CD14-positive monocyte (primary cell): ENCODE measurements at regions of chr2 and their contacts with region 1.

Region 1: GRCh38 chr2:238060542-238061314 is at the start of gene SCLY:
- DNase-seq: peak; percentile 98
- H3K4me3 ChIP-seq: peak within 1 kb of the TSS; percentile 74 to 88 (median 82)
- H3K4me3 Mint-ChIP-seq: peak within 1 kb of the TSS; percentile 90 to 94
- H3K27ac ChIP-seq: peak within 1 kb of the TSS; percentile 66 to 91
- H3K27ac Mint-ChIP-seq: peak within 1 kb of the TSS; percentile 82 to 95 (median 90)
- H3K4me1 ChIP-seq: peaks cover 17 to 23% of the 10 kb centered on the region in 2 donors
- H3K4me1 Mint-ChIP-seq: peaks cover 22% of the 10 kb centered on the region
- H3K27me3 ChIP-seq: peaks cover 3 to 19% of the 10 kb centered on the region in 2 donors
- H3K27me3 Mint-ChIP-seq: peaks cover 8 to 24% (median 22%) of the 10 kb centered on the region in 3 donors
- CTCF ChIP-seq: no peak
- polyA plus RNA-seq, gene SCLY: 9.5 to 10.6 (median 10.3) TPM

Region 2: DNA sequence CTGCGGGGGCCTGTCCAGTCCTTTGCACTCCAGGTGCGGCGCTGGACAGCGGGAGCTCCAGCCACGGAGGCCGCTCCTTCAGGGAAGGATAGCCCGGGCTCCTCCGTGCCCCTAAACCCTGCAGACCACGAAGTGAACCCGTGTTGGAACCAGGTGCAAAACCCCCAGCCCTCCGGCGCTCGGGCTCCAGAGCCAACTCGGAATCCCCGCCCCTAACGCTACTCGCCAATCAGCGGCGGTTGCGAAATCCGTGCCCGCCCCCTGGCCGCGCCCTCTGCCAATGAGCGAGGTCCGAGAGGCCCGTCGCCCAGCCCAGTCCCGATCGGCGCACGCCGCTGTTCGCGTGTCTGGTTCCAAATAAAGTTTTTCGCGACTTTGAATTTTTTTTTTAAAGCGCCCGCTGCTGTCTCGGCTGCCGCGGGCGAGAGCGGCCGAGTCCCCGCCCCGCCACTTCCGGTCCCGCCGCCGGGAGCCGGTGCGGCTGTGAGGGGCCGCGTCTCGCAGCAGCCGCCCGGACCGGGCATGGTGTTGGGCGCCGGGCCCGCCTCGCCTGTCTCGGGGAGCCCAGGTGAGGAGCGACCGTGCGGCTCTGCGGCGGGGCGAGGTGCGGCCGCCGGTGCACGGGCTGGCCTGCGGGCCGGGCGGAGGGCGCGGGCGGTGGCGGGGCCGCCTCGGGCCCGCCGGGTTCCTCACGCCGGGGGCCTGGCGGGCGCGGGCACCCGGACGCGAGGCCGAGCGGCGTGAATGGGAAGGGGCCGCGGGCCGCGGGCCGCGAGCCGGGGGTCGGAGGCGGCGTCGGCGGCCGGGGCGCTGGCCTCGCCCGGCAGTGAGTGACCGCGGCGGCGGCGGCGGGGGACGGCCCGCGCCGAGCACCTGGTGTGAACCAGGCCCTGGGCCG is 93.9 kb before region 1 on chr2 and contains the start of gene UBE2F:
- intact Hi-C with region 1: loop called (anchors 2 to 5 kb)
- DNase-seq: peak; percentile 96 to 97 (median 96)
- H3K4me3 ChIP-seq: peak within 1 kb of the TSS; percentile 76 to 90 (median 87)
- H3K4me3 Mint-ChIP-seq: peak within 1 kb of the TSS; percentile 88
- H3K27ac ChIP-seq: peak within 1 kb of the TSS; percentile 71 to 79
- H3K27ac Mint-ChIP-seq: peak within 1 kb of the TSS; percentile 83 to 96 (median 92)
- H3K4me1 ChIP-seq: peaks cover 37 to 39% of the 10 kb centered on the region in 2 donors
- H3K4me1 Mint-ChIP-seq: peaks cover 37% of the 10 kb centered on the region
- H3K27me3 ChIP-seq: no peaks in the 10 kb centered on the region
- H3K27me3 Mint-ChIP-seq: peaks cover 0 to 2% (median 2%) of the 10 kb centered on the region in 3 donors
- CTCF ChIP-seq: no peak
- polyA plus RNA-seq, gene UBE2F: 51.1 to 120 (median 117) TPM

Region 3: DNA sequence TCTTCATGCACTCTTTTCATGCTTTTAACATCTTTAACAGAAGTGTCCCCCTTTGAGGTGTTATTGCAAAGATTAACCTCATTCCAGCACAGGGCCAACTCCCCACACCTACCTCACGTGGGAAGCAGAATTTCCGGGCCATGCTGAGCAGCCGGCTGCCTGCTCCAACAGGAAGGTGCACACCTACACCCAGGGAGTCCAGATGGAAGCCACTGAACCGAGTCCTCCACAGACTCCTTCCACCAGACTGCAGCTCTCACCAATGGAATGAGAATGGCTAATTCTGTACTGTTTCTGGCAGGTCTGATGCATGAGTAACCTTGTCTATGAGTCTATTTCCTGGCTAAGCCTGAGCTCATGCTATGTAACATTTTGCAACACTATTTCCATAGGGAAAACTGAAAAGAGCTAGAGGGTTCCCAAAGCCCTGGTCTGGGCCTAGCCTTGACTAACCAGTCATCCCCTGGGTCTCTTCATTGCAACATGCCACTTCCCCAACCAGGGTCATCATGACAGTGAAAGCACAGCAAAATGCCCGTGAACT is 109.1 kb after region 1 on chr2:
- intact Hi-C with region 1: no loop called
- DNase-seq: peak in 1 of 3 donors; percentile 19
- H3K4me3 ChIP-seq: no peak overlapping the region
- H3K4me3 Mint-ChIP-seq: no peak overlapping the region
- H3K27ac ChIP-seq: no peak overlapping the region
- H3K27ac Mint-ChIP-seq: peak overlapping the region in 3 of 7 donors; percentile 17 to 73 (median 73)
- H3K4me1 ChIP-seq: no peaks in the 10 kb centered on the region
- H3K4me1 Mint-ChIP-seq: peaks cover 7% of the 10 kb centered on the region
- H3K27me3 ChIP-seq: peaks cover 0 to 4% of the 10 kb centered on the region in 2 donors
- H3K27me3 Mint-ChIP-seq: peaks cover 10 to 14% (median 12%) of the 10 kb centered on the region in 3 donors
- CTCF ChIP-seq: no peak

Region 4: DNA sequence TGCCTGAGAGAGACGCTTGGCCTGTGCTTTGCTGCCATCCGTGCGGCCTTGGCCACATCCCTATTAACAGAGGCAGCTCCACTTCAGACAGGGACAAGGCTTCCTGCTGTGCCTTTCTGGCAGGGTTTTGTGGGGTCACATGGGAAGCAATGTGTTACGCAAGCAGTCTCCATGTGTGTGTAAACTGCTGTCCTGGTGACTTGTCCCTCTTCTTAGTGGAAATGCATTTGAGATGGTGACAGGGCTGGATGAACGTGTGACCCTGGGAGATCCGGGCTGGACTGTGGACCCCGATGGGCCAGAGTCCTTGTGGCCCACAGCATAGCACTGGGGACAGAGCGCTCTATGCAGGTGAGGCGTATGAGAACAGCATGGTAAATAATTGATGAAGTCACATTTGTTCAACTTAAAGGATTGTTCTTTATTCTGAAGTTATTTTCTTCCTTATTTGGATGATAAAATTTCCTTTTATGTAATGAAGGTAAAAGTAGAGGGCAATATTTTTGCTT is 389.2 kb after region 1 on chr2:
- intact Hi-C with region 1: no loop called
- DNase-seq: peak; percentile 36 to 61 (median 51)
- H3K4me3 ChIP-seq: no peak overlapping the region
- H3K4me3 Mint-ChIP-seq: no peak overlapping the region
- H3K27ac ChIP-seq: peak overlapping the region; percentile 2 to 45
- H3K27ac Mint-ChIP-seq: peak overlapping the region in 6 of 7 donors; percentile 16 to 86 (median 42)
- H3K4me1 ChIP-seq: peaks cover 7 to 18% of the 10 kb centered on the region in 2 donors
- H3K4me1 Mint-ChIP-seq: peaks cover 16% of the 10 kb centered on the region
- H3K27me3 ChIP-seq: no peaks in the 10 kb centered on the region
- H3K27me3 Mint-ChIP-seq: peaks cover 0 to 4% (median 2%) of the 10 kb centered on the region in 3 donors
- CTCF ChIP-seq: no peak